Activated B cell treated with CpG ODN at 0.5 μM for 24 hours (primary cell): ENCODE measurements at regions of chr2 and their contacts with region 1.

Region 1: GRCh38 chr2:38076606-38077430 is 867 bp upstream of the CYP1B1 start:
- DNase-seq: peak; percentile 26
- ATAC-seq: peak; percentile 55
- H3K4me3 Mint-ChIP-seq: peak overlapping the region; percentile 80
- H3K27ac Mint-ChIP-seq: no peak overlapping the region
- H3K4me1 Mint-ChIP-seq: peaks cover 28% of the 10 kb centered on the region
- H3K27me3 Mint-ChIP-seq: peaks cover 59% of the 10 kb centered on the region
- CTCF ChIP-seq: no peak

Region 2: DNA sequence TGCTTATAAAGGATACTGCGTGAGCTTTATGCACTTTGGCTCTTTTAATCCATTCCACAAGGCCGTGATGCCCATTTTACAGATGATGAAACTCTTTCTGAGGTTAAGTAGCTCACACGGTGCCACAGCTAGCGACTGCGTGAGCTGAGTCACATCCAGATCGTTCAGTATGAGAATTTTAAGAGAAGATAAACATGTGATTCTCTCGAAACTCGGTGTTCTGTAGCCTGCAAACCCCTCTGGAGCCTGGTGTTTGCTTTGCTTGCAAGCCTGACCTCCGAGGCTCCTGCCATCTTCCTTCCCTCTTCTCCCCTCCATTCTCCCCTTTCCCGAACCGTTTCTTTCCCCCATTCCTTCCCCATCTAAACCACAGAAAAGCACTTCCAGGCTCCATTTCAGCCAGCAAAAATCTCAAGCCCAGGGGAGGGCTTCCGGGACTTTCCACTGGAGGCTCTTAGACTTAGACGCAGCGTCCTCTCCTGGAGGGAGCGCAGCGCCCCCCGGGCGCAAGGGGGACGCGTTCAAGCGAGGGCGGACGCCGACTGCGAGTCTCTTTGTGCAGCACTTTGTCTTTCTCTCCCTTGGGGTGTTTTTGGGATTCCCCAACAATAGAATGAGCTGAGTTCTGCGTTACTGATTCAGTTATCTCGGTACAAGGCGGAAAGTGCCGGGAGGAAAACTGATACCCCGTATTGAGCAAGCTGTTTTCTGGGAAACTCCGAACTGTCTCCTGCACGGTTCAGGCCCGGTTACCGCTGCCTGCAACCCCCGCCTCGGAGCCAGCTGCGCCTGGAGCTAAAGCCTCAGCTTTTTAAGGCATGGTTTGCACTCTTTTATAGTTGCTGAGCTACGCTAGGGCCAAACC is 38.8 kb before region 1 on chr2:
- CTCF ChIA-PET with region 1: interaction called, 5 read pairs
- POLR2A ChIA-PET with region 1: interaction called, 5 read pairs
- intact Hi-C with region 1: loop called (anchors 5 kb)
- DNase-seq: peak; percentile 19
- ATAC-seq: peak; percentile 88
- H3K4me3 Mint-ChIP-seq: peak overlapping the region; percentile 78
- H3K27ac Mint-ChIP-seq: peak overlapping the region; percentile 78
- H3K4me1 Mint-ChIP-seq: peaks cover 15% of the 10 kb centered on the region
- H3K27me3 Mint-ChIP-seq: peaks cover 30% of the 10 kb centered on the region
- CTCF ChIP-seq: no peak